Left cardiac atrium (tissue), 4 donors: ENCODE measurements at regions of chrX and their contacts with region 1.

Region 1: GRCh38 chrX:103823591-103823990 is 8.5 kb downstream of the RAB9B start:
- DNase-seq: no peak
- ATAC-seq: no peak

Region 2: DNA sequence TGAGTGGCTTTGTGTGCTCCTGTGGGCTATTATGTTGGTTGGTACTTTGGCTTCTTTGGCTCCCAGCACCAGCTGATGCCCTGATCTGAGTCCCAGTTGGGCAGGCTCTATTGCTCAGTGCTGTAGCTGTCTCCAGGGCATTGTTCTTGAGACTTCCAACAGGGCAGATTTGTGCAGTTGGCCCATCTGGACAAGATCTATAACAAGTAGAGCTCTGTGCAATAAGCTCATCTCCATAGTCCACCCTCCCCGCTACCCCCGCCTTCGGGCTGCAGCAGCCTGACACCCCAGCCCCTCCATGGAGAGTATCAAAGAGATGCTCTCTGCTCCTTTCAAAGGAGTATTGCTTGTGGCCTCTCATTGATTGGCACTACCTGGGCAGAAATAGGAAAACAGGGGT is 118.7 kb before region 1 on chrX:
- intact Hi-C with region 1: loop called in 1 of 2 experiments (anchors 5 kb)
- DNase-seq: no peak
- ATAC-seq: no peak